Activated naive CD4-positive, alpha-beta T cell treated with anti-CD3 and anti-CD28 coated beads for 36 hours (primary cell): ENCODE measurements at regions of chr18 and their contacts with region 1.

Region 1: GRCh38 chr18:58768293-58768974 is 96.2 kb upstream of the ZNF532 start:
- DNase-seq: peak; percentile 84
- H3K4me3 Mint-ChIP-seq: peak overlapping the region; percentile 15
- H3K27ac Mint-ChIP-seq: no peak overlapping the region
- H3K4me1 Mint-ChIP-seq: peaks cover 6% of the 10 kb centered on the region
- H3K27me3 Mint-ChIP-seq: peaks cover 36% of the 10 kb centered on the region

Region 2: DNA sequence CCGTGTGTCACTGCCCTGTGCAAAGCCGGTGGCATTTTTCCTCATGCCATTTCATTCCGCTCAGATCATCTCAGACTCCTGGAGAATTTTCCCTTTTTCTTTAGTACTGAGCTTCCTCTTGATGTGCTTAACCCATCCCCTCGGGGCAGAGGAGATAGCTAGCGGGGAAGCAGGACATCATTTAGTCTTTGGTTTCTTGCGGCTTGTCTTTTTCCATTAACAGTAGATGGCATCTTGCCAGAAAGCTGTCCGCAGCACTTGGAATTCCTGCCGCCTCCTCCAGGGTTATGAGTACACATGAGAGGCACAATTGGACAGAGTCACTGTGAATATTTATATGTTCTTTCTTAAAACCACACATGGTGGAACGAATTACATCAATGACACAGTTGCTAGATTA is 366.2 kb before region 1 on chr18:
- CTCF ChIA-PET with region 1: interaction called, 4 read pairs
- intact Hi-C with region 1: loop called (anchors 1 kb)
- DNase-seq: no peak
- H3K4me3 Mint-ChIP-seq: no peak overlapping the region
- H3K27ac Mint-ChIP-seq: no peak overlapping the region
- H3K4me1 Mint-ChIP-seq: peaks cover 25% of the 10 kb centered on the region
- H3K27me3 Mint-ChIP-seq: no peaks in the 10 kb centered on the region

Region 3: DNA sequence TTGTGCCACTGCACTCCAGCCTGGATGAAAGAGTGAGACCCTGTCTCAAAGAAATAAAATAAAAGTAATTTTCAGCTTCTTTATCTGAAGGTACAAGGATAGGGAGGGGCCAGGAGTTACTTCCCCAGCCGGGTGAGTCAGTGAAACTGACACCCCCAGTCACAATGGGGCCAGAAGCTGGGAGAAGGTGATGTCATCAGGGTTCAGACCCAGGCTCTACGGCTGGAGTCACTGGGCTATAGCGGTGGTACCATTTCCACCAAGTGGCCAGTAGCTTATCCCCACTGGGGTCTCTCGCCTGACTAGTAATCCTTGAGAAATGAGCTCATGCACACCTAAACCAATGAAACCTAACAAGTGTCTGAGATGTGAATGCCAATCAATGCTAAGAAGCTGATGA is 247.5 kb before region 1 on chr18:
- CTCF ChIA-PET with region 1: interaction called, 426 read pairs
- intact Hi-C with region 1: no loop called
- DNase-seq: peak; percentile 40
- H3K4me3 Mint-ChIP-seq: no peak overlapping the region
- H3K27ac Mint-ChIP-seq: no peak overlapping the region
- H3K4me1 Mint-ChIP-seq: peaks cover 14% of the 10 kb centered on the region
- H3K27me3 Mint-ChIP-seq: peaks cover 3% of the 10 kb centered on the region

Region 4: DNA sequence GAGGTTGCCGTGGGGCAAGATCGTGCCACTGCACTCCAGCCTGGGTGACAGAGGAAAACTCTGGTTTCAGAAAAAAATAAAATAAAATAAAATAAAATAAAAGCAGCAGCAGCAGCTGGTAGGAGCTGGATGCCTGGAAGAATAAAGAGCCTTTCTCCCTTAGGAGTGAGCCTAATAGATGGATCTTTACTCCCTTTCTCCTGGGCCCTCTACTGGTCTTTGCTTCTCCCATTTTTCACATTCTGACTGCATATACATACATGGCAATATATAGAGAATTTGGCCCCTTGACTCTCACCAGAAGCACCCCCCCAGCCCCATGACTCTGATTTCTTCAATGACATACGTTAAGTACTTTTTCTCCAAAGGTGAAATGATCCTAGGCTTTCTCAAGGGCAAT is 107.0 kb before region 1 on chr18:
- CTCF ChIA-PET with region 1: interaction called, 17 read pairs
- intact Hi-C with region 1: no loop called
- DNase-seq: no peak
- H3K4me3 Mint-ChIP-seq: no peak overlapping the region
- H3K27ac Mint-ChIP-seq: no peak overlapping the region
- H3K4me1 Mint-ChIP-seq: peaks cover 49% of the 10 kb centered on the region
- H3K27me3 Mint-ChIP-seq: no peaks in the 10 kb centered on the region

Region 5: DNA sequence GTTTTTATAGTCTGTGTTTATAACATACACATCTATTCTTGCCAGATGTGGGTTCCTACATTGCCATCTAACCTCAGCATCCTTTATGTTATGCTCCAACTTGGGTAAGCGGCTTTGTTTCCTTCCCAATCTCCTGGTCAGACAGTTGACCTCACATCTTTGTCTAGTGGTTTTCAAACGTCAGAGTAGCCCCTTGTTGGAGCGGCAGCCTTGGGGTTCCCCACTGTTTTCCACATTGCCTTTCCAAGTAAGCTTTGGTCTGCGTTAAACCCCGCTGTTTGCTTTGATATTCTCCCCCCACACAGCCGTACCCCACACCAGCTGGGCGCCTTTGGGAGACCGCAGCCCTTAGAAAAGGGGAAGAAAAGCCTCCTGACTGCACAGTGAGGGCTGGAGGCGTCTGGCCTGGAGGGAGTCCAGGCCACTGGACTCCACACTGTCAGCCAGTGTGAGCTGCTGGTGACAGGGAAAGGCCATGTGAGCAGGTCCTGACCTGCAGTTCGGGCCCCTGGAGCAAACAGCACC is 13.8 kb before region 1 on chr18:
- CTCF ChIA-PET with region 1: interaction called, 87 read pairs
- intact Hi-C with region 1: no loop called
- DNase-seq: no peak
- H3K4me3 Mint-ChIP-seq: no peak overlapping the region
- H3K27ac Mint-ChIP-seq: no peak overlapping the region
- H3K4me1 Mint-ChIP-seq: peaks cover 23% of the 10 kb centered on the region
- H3K27me3 Mint-ChIP-seq: no peaks in the 10 kb centered on the region

Region 6: DNA sequence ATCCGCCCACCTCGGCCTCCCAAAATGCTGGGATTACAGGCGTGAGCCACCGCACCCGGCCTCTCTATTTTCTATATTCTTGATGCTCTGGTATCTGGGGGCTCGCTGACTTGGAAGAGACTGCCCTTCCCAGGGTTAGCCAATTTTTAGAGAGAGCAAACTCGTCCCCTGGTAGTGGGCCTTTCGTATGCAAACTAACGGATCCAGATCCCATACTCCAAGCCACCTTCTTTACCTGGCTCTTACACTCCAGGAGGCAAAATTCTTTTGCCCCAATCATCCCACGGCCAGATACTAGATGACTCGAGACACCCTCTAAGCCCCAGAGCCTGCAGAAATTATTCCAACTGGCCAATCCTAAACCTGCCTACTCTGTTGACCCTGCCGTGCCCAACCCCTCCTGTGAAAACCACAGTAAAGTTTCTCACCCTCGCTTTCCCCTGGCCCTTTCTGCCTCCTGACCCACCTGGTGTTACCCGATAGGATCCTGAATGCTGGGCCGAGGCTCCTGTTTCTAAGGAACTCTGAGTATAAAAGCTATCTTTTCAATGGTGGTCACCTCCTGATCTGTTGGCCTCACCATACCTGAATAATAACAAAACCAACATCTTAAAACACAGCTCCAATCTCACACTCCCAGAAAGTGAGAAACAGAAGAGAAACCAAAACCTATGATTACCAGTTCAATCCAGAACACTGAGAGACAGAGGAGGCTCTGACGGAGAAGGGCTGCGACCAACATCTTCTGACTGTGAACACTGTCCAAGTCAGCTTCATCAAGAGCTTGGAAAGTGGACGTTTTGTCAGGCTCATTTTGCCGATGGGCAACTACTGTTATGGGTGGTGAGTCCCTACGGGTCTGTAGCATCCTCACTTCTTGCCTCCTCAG is 38.6 kb after region 1 on chr18:
- CTCF ChIA-PET with region 1: no interaction called
- intact Hi-C with region 1: no loop called
- DNase-seq: no peak
- H3K4me3 Mint-ChIP-seq: no peak overlapping the region
- H3K27ac Mint-ChIP-seq: no peak overlapping the region
- H3K4me1 Mint-ChIP-seq: no peaks in the 10 kb centered on the region
- H3K27me3 Mint-ChIP-seq: peaks cover 20% of the 10 kb centered on the region

Region 7: DNA sequence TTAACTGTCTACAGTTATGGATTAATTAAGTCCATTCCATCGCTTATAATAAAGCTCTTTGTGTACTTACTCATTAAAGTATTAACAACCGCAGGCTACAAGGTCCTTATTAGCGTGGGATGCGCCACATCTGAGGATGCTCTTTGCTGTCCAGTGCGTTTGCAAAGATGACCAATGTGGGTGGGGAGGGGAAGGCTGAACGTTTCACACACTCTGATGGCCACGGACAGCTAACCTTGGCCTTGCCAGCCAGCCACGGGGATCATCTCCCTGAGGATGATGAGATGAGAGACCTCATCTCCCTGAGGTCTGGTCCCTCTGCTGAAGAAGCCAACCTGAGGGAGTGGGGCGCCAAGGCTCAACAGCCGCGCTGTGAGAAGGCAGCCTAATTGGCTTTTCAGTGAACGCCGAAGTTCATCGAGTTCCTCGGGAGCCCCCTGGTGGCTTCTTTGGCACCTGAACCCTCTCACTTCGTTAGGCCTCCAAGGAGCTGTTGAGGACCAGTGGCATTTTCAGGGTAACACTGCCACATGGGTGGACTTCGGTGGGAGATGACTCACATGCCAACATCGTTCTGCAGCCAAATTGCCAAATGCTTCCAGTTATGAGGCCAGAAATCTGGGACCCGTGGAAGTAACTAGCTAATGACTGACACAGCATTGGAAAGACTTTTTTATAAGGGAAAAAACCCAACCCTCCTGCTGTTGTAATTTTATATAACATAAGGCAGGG is 301.9 kb after region 1 on chr18:
- CTCF ChIA-PET with region 1: interaction called, 94 read pairs
- intact Hi-C with region 1: loop called (anchors 1 kb)
- DNase-seq: peak; percentile 88
- H3K4me3 Mint-ChIP-seq: no peak overlapping the region
- H3K27ac Mint-ChIP-seq: no peak overlapping the region
- H3K4me1 Mint-ChIP-seq: no peaks in the 10 kb centered on the region
- H3K27me3 Mint-ChIP-seq: no peaks in the 10 kb centered on the region